Transverse colon (tissue), 4 donors: ENCODE measurements at regions of chr16 and their contacts with region 1.

Region 1: GRCh38 chr16:69396187-69397061 is 10.6 kb upstream of the TERF2 start:
- DNase-seq: peak; percentile 83
- H3K4me3 ChIP-seq: peak overlapping the region in 1 of 4 donors; percentile 36
- H3K27ac ChIP-seq: peak overlapping the region; percentile 85 to 91 (median 89)
- H3K4me1 ChIP-seq: peaks cover 20 to 45% (median 27%) of the 10 kb centered on the region in 4 donors
- H3K27me3 ChIP-seq: no peaks in the 10 kb centered on the region
- CTCF ChIP-seq: peak in 4 of 5 experiments; percentile 66 to 95 (median 82)
- EP300 ChIP-seq: peak; percentile 3
- POLR2A ChIP-seq: peak; percentile 53

Region 2: GRCh38 chr16:69465083-69465721 is 68.8 kb after region 1 on chr16:
- in situ Hi-C with region 1: no loop called
- intact Hi-C with region 1: no loop called
- DNase-seq: peak; percentile 27
- H3K4me3 ChIP-seq: no peak overlapping the region
- H3K27ac ChIP-seq: peak overlapping the region in 2 of 4 donors; percentile 10 to 17
- H3K4me1 ChIP-seq: peaks cover 0 to 24% (median 8%) of the 10 kb centered on the region in 4 donors
- H3K27me3 ChIP-seq: no peaks in the 10 kb centered on the region
- CTCF ChIP-seq: peak in 1 of 5 experiments; percentile 7
- EP300 ChIP-seq: no peak
- POLR2A ChIP-seq: no peak

Region 3: DNA sequence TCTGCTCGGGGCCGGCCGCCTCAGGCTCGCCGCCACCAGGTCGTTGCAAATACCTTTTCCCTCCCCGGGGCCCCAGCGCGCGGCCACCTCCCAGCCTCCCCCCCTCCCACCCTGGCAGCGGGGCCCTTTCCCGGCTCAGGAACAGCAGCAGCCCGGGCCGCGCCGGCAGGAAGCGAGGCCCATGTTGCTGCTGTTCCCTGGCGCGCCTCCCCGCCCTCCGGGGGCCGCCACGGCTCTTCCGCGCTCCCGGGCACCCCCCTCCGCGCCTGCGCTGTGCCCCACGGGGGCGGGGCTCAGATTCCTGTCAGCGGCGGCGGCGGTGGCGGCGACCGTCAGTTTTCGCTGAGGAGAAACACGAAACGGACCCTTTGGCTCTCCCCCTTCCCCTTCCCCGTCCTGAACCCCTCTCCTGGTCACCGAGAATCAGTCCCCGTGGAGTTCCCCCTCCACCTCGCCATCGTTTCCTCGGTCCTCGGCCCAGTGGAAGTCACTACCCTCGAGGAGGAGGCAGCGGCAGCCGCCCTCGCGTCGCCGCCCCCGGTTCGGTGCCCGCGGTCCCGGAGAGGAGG is 169.3 kb after region 1 on chr16 and contains the start of gene NFAT5:
- in situ Hi-C with region 1: no loop called
- intact Hi-C with region 1: loop called (anchors 10 kb)
- DNase-seq: peak; percentile 91
- H3K4me3 ChIP-seq: peak within 1 kb of the TSS; percentile 85 to 100 (median 94)
- H3K27ac ChIP-seq: peak within 1 kb of the TSS; percentile 98 to 99 (median 98)
- H3K4me1 ChIP-seq: peaks cover 14 to 62% (median 36%) of the 10 kb centered on the region in 4 donors
- H3K27me3 ChIP-seq: no peaks in the 10 kb centered on the region
- CTCF ChIP-seq: no peak
- EP300 ChIP-seq: no peak
- POLR2A ChIP-seq: peak; percentile 90
- total RNA-seq, gene NFAT5: 37.3 to 131 (median 88.8) TPM

Region 4: GRCh38 chr16:69709456-69710084 is 313.1 kb after region 1 on chr16:
- in situ Hi-C with region 1: loop called in 1 of 4 experiments (anchors 25 kb)
- intact Hi-C with region 1: no loop called
- DNase-seq: no peak
- H3K4me3 ChIP-seq: no peak overlapping the region
- H3K27ac ChIP-seq: peak overlapping the region in 3 of 4 donors; percentile 25 to 56 (median 37)
- H3K4me1 ChIP-seq: peaks cover 0 to 38% (median 12%) of the 10 kb centered on the region in 4 donors
- H3K27me3 ChIP-seq: no peaks in the 10 kb centered on the region
- CTCF ChIP-seq: peak; percentile 71 to 88 (median 73)
- EP300 ChIP-seq: no peak
- POLR2A ChIP-seq: no peak

Region 5: DNA sequence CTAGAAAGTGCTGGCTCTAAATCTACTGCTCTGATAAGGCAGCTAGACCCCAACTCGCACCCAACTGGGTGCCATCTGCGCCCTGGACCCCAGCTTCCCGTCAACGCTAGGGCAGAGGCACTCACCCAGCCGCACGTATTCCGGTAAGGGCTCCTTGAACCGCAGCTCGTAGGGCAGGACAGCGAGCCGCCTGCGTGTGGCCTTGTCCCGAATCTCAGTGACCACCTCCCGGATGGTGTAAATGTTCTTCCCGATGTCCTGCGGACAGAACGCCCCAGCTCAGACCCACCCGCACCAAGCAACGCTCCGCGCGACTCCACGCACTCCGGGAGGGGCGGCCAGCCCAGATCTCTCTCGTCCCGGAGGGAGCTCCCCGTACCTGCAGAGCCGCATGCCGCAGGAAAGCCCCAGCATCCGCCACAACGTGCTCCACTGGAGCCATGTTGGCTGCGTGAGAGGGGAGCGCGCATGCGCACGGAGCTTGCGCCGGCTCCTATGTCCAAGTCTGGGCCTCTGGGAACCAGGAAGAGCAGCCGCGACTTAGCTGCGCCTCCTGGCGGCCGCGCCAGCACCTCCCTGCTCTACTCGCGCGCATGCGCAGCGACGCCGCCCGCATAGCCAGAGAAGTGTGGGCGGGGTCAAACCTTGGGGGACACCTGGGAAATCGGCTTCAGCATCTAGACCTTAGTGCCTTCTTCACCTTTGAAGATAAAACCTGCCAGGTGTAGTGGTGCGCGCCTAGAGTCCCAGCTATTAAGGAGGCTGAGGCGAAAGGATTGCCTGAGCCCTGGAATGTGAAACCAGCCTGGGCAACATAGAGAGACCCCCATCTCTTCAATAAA is 358.3 kb after region 1 on chr16 and contains the start of gene NOB1:
- in situ Hi-C with region 1: loop called in 1 of 4 experiments (anchors 10 kb)
- intact Hi-C with region 1: no loop called
- DNase-seq: peak; percentile 97
- H3K4me3 ChIP-seq: peak within 1 kb of the TSS; percentile 49 to 74 (median 60)
- H3K27ac ChIP-seq: peak within 1 kb of the TSS; percentile 60 to 83 (median 80)
- H3K4me1 ChIP-seq: peaks cover 0 to 20% (median 15%) of the 10 kb centered on the region in 4 donors
- H3K27me3 ChIP-seq: no peaks in the 10 kb centered on the region
- CTCF ChIP-seq: peak; percentile 89 to 100 (median 98)
- EP300 ChIP-seq: no peak
- POLR2A ChIP-seq: peak; percentile 64
- total RNA-seq, gene NOB1: 21.2 to 60.2 (median 34.0) TPM